ENCODE measurements at regions of chr11 and their contacts with region 1.

Region 1: DNA sequence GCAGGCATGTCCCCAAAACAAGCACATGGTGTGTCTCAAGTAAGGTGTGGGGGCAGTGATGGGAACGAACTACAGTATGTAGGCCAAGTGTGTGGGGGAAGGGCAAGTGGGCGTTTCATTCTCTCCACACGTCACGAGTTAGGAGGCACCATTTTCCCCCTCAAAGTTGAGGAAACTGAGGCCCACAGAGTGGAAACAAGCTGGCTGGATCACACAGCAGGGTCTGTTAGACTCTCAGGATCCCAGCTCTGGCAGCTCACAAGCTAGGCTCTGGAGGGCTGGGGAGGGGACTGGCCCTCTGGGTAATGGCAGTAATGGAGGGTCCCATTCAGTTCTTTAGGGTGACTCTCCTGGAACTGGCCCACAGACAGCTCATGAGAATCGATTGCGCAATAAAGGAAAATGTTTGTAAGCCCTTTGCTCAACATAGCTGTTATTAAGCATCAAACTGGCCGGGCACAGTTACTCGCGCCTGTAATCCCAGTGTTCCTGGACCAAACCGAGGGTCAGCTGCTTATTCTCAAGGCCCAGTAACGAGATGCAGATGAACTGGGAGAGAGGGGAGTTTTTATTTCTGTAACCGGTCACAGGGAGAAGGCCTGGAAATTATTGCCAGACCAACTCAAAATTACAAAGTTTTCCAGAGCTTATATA is 24.1 kb upstream of the TUB start:
- DNase-seq: peak in 1 of 2 experiments; percentile 36
- H3K4me3 ChIP-seq: no peak overlapping the region
- H3K27ac ChIP-seq: no peak overlapping the region
- H3K4me1 ChIP-seq: peaks cover 0 to 5% (median 0%) of the 10 kb centered on the region in 4 experiments; a peak in 2 of 7 replicates
- H3K27me3 ChIP-seq: no peaks in the 10 kb centered on the region
- CTCF ChIP-seq: no peak
- EP300 ChIP-seq: no peak
- POLR2A ChIP-seq: no peak
- RAD21 ChIP-seq: no peak

Region 2: GRCh38 chr11:7332962-7333361 is 724.0 kb before region 1 on chr11:
- CTCF ChIA-PET with region 1: no interaction called
- POLR2A ChIA-PET with region 1: no interaction called
- DNase-seq: no peak
- H3K4me3 ChIP-seq: no peak overlapping the region
- H3K27ac ChIP-seq: no peak overlapping the region
- H3K4me1 ChIP-seq: no peaks in the 10 kb centered on the region
- H3K27me3 ChIP-seq: no peaks in the 10 kb centered on the region
- CTCF ChIP-seq: no peak
- EP300 ChIP-seq: no peak
- POLR2A ChIP-seq: no peak
- RAD21 ChIP-seq: no peak

Region 3: GRCh38 chr11:8070417-8071115 is 13.6 kb after region 1 on chr11:
- CTCF ChIA-PET with region 1: interaction called, 69 read pairs
- POLR2A ChIA-PET with region 1: interaction called, 4 read pairs
- DNase-seq: no peak
- H3K4me3 ChIP-seq: no peak overlapping the region
- H3K27ac ChIP-seq: no peak overlapping the region
- H3K4me1 ChIP-seq: peaks cover 2 to 18% (median 7%) of the 10 kb centered on the region in 4 experiments
- H3K27me3 ChIP-seq: no peaks in the 10 kb centered on the region; a peak in 2 of 7 replicates
- CTCF ChIP-seq: peak in 1 of 3 experiments; percentile 15; a peak in 1 of 4 replicates
- EP300 ChIP-seq: no peak
- POLR2A ChIP-seq: no peak
- RAD21 ChIP-seq: peak; percentile 19 to 38; a peak in 3 of 4 replicates